Adrenal gland (tissue), 19 donors: ENCODE measurements at regions of chr1 and their contacts with region 1.

Region 1: DNA sequence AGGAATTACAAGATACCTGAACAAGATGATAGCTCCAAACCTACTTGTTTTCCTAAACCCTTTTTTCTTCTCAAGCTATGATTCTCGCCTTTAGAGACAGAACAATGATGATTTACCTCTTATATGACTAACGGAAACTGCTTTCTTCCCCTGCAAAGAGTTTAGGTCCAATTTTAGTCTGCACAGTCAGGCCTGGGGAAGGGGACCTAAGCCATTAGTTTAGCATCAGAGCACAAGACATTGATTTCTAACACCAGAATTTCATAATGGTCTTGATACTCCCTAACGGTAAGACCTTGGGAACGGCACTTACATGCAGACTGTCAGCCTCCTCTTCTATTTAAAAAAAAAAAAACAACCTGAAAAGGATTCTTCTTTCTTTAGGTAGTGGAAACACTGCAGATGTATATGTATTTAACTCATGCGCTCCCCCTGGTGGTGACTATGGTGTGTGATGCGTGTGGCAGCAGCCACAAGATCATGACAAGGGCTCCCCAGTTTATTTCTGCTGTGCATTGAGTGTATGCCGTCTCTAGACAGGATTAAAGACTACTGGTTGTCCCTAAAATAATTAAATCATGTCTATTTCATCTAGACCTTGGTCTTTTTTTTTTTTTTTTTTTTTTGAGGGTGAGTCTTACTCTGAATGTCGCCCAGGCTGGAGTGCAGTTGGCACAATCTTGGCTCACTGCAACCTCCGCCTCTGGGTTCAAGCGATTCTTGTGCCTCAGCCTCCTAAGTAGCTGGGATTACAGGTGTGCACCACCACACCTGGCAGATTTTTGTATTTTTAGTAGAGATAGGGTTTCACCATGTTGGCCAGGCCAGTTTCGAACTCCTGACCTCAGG is 37.3 kb upstream of the TMEM222 start:
- DNase-seq: peak; percentile 84 to 95 (median 90)
- H3K4me3 ChIP-seq: no peak overlapping the region
- H3K27ac ChIP-seq: no peak overlapping the region
- H3K4me1 ChIP-seq: no peaks in the 10 kb centered on the region
- H3K27me3 ChIP-seq: no peaks in the 10 kb centered on the region
- CTCF ChIP-seq: peak; percentile 71 to 92 (median 84)
- POLR2A ChIP-seq: no peak

Region 2: DNA sequence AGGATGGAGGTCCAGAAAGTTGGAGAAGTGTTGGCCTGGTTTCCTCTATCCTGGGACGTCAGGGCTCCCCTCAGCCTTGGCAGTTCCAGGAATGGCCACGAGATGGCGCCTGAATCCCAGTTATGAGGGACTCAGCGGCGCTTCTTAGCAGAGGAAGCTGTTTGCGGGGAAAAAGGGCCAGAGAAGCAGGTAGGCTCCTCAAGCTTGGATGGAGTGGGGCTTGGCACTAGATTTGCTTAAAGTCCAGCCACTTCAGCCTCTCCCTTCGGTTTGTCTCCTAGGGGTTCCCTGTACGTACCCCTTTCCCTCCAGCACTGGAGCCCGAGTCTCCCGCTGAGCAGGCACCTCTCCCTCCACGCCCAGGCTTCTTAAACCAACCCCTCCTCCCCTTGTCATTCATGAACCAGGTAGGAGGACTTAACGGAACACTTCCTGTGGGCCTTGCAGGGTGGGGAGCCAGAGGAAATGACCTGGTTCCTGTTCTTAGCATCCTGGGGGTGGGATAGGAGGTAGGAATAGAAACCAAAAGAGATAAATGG is 240.0 kb before region 1 on chr1:
- intact Hi-C with region 1: loop called in 1 of 2 experiments (anchors 5 kb)
- DNase-seq: peak; percentile 78 to 95 (median 90)
- H3K4me3 ChIP-seq: peak overlapping the region in 1 of 4 donors; percentile 10
- H3K27ac ChIP-seq: no peak overlapping the region
- H3K4me1 ChIP-seq: peaks cover 4 to 13% of the 10 kb centered on the region in 2 donors
- H3K27me3 ChIP-seq: no peaks in the 10 kb centered on the region
- CTCF ChIP-seq: peak; percentile 94 to 99 (median 98)
- POLR2A ChIP-seq: no peak

Region 3: GRCh38 chr1:27102707-27103491 is 181.8 kb before region 1 on chr1:
- intact Hi-C with region 1: loop called (anchors 2 kb)
- DNase-seq: peak; percentile 65 to 93 (median 78)
- H3K4me3 ChIP-seq: no peak overlapping the region
- H3K27ac ChIP-seq: no peak overlapping the region
- H3K4me1 ChIP-seq: peaks cover 6 to 14% of the 10 kb centered on the region in 2 donors
- H3K27me3 ChIP-seq: no peaks in the 10 kb centered on the region
- CTCF ChIP-seq: peak; percentile 95 to 99 (median 96)
- POLR2A ChIP-seq: no peak

Region 4: GRCh38 chr1:27192039-27192529 is 92.6 kb before region 1 on chr1:
- intact Hi-C with region 1: loop called in 1 of 2 experiments (anchors 10 kb)
- DNase-seq: peak in 6 of 7 donors; percentile 35 to 63 (median 51)
- H3K4me3 ChIP-seq: no peak overlapping the region
- H3K27ac ChIP-seq: no peak overlapping the region
- H3K4me1 ChIP-seq: peaks cover 9 to 15% of the 10 kb centered on the region in 2 donors
- H3K27me3 ChIP-seq: no peaks in the 10 kb centered on the region
- CTCF ChIP-seq: no peak
- POLR2A ChIP-seq: no peak

Region 5: GRCh38 chr1:27203946-27204345 is 80.7 kb before region 1 on chr1:
- intact Hi-C with region 1: loop called (anchors 2 to 10 kb)
- DNase-seq: no peak
- H3K4me3 ChIP-seq: no peak overlapping the region
- H3K27ac ChIP-seq: no peak overlapping the region
- H3K4me1 ChIP-seq: no peaks in the 10 kb centered on the region
- H3K27me3 ChIP-seq: no peaks in the 10 kb centered on the region
- CTCF ChIP-seq: no peak
- POLR2A ChIP-seq: no peak

Region 6: GRCh38 chr1:27218736-27219135 is 65.9 kb before region 1 on chr1:
- intact Hi-C with region 1: no loop called
- DNase-seq: no peak
- H3K4me3 ChIP-seq: no peak overlapping the region
- H3K27ac ChIP-seq: no peak overlapping the region
- H3K4me1 ChIP-seq: no peaks in the 10 kb centered on the region
- H3K27me3 ChIP-seq: no peaks in the 10 kb centered on the region
- CTCF ChIP-seq: no peak
- POLR2A ChIP-seq: no peak